ENCODE measurements at regions of chr10 and their contacts with region 1.

Region 1: GRCh38 chr10:107708981-107709380 is 544.5 kb upstream of the SORCS1 start:
- DNase-seq: no peak
- ATAC-seq: no peak
- H3K4me3 ChIP-seq: no peak overlapping the region
- H3K27ac ChIP-seq: no peak overlapping the region
- H3K4me1 ChIP-seq: no peaks in the 10 kb centered on the region
- H3K27me3 ChIP-seq: no peaks in the 10 kb centered on the region
- CTCF ChIP-seq: no peak
- POLR2A ChIP-seq: no peak

Region 2: GRCh38 chr10:107671960-107672359 is 37.0 kb before region 1 on chr10:
- intact Hi-C with region 1: loop called in 1 of 10 experiments (anchors 2 kb)
- DNase-seq: no peak
- ATAC-seq: no peak
- H3K4me3 ChIP-seq: no peak overlapping the region
- H3K27ac ChIP-seq: no peak overlapping the region
- H3K4me1 ChIP-seq: no peaks in the 10 kb centered on the region
- H3K27me3 ChIP-seq: no peaks in the 10 kb centered on the region
- CTCF ChIP-seq: no peak
- POLR2A ChIP-seq: no peak